Activated CD4-positive, alpha-beta memory T cell treated with anti-CD3 and anti-CD28 coated beads for 36 hours (primary cell): ENCODE measurements at regions of chr5 and their contacts with region 1.

Region 1: GRCh38 chr5:96807075-96807654 is 580 bp downstream of the ERAP1 start:
- DNase-seq: peak; percentile 59
- H3K4me3 Mint-ChIP-seq: peak overlapping the region; percentile 94
- H3K27ac Mint-ChIP-seq: peak overlapping the region; percentile 98
- H3K4me1 Mint-ChIP-seq: peaks cover 72% of the 10 kb centered on the region
- H3K27me3 Mint-ChIP-seq: no peaks in the 10 kb centered on the region

Region 2: DNA sequence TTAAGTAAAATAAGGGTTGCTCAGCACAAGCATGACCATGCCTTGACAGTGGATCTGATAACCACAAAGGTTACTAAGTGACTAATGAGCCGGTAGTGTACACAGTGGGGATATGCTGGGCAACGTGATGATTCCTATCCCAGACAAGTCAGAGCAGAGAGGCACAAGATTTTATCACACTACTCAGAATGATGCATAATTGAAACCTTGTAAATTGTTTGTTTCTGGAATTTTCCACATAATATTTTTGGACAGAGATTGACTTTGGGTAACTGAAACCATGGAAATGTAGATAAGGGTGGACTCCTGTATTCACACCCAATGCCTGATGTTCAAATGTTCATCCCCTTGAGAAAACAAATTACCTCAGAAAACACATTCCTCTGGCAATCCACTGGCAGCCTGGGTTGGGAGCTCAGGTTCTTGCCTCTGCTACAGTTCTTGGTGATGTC is 16.8 kb after region 1 on chr5:
- CTCF ChIA-PET with region 1: interaction called, 12 read pairs
- POLR2A ChIA-PET with region 1: interaction called, 40 read pairs
- intact Hi-C with region 1: loop called (anchors 2 kb)
- DNase-seq: peak; percentile 46
- H3K4me3 Mint-ChIP-seq: no peak overlapping the region
- H3K27ac Mint-ChIP-seq: no peak overlapping the region
- H3K4me1 Mint-ChIP-seq: peaks cover 46% of the 10 kb centered on the region
- H3K27me3 Mint-ChIP-seq: no peaks in the 10 kb centered on the region

Region 3: DNA sequence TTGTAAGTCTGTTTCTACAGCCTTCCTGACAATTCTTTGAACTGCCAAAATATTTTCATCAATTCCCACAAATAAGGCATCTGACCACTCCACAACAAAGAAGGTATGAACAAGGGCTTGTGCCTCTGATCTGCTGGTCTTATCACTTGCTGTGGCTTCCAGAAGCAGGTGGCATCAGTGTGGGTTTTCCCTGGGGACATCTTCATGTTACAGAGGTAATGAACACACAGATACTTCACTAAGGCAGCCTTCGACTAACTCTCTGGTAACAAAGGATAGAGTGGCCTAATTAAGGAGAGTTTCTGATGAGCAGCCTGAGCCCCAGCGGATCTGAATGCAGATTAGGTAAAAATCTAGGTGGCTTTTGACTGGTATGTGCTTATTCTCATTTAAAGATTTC is 53.9 kb after region 1 on chr5:
- CTCF ChIA-PET with region 1: no interaction called
- POLR2A ChIA-PET with region 1: interaction called, 13 read pairs
- intact Hi-C with region 1: no loop called
- DNase-seq: no peak
- H3K4me3 Mint-ChIP-seq: no peak overlapping the region
- H3K27ac Mint-ChIP-seq: no peak overlapping the region
- H3K4me1 Mint-ChIP-seq: peaks cover 19% of the 10 kb centered on the region
- H3K27me3 Mint-ChIP-seq: no peaks in the 10 kb centered on the region

Region 4: GRCh38 chr5:96876292-96876850 is 69.2 kb after region 1 on chr5 and contains the start of gene ERAP2:
- CTCF ChIA-PET with region 1: interaction called, 6 read pairs
- POLR2A ChIA-PET with region 1: interaction called, 32 read pairs
- intact Hi-C with region 1: no loop called
- DNase-seq: peak; percentile 30
- H3K4me3 Mint-ChIP-seq: peak within 1 kb of the TSS; percentile 96
- H3K27ac Mint-ChIP-seq: peak within 1 kb of the TSS; percentile 97
- H3K4me1 Mint-ChIP-seq: peaks cover 63% of the 10 kb centered on the region
- H3K27me3 Mint-ChIP-seq: no peaks in the 10 kb centered on the region
- total RNA-seq, gene ERAP2: 44.8 to 48.9 TPM

Region 5: DNA sequence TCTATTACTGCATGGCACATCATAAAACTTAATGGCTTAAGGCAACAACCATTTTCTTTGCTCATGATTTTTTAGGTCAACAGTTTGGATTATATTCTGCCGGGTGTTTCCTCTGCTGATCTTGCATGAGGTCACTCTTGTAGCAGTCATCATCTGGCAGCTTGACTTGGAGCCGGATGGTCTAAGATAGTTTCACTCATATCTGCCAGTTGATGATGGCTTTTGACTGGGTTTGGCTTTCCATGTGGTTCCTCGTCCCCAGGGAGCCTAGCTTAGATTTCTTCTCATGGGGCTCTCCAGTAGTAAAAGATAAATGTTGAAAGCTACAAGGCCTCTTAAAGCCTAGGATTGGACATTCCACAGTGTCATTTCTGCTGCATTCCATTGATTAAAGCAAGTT is 156.1 kb after region 1 on chr5:
- CTCF ChIA-PET with region 1: no interaction called
- POLR2A ChIA-PET with region 1: interaction called, 4 read pairs
- intact Hi-C with region 1: loop called (anchors 5 kb)
- DNase-seq: peak; percentile 41
- H3K4me3 Mint-ChIP-seq: peak overlapping the region; percentile 59
- H3K27ac Mint-ChIP-seq: peak overlapping the region; percentile 86
- H3K4me1 Mint-ChIP-seq: peaks cover 77% of the 10 kb centered on the region
- H3K27me3 Mint-ChIP-seq: no peaks in the 10 kb centered on the region

Region 6: DNA sequence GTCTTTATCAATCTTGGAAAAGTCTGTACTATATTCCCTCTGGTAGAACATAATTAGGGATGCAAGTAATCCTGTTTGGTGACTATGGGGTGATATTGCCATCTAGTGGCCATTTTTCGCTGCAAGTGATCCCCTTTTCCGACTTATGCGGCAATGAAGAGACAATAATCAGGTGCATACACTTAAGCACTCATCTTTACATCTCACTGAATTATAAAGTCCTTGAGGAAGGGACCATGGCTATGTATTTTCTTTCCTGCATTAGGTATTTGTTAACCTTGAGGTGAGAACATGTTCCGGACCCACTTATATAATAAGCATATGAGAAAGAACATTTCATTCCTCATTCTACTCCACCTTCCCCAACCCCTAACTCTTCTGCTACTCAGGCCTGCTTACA is 354.9 kb after region 1 on chr5:
- CTCF ChIA-PET with region 1: interaction called, 10 read pairs
- POLR2A ChIA-PET with region 1: no interaction called
- intact Hi-C with region 1: loop called (anchors 5 kb)
- DNase-seq: peak; percentile 64
- H3K4me3 Mint-ChIP-seq: no peak overlapping the region
- H3K27ac Mint-ChIP-seq: no peak overlapping the region
- H3K4me1 Mint-ChIP-seq: peaks cover 17% of the 10 kb centered on the region
- H3K27me3 Mint-ChIP-seq: no peaks in the 10 kb centered on the region